B cell (primary cell): ENCODE measurements at regions of chr11 and their contacts with region 1.

Region 1: DNA sequence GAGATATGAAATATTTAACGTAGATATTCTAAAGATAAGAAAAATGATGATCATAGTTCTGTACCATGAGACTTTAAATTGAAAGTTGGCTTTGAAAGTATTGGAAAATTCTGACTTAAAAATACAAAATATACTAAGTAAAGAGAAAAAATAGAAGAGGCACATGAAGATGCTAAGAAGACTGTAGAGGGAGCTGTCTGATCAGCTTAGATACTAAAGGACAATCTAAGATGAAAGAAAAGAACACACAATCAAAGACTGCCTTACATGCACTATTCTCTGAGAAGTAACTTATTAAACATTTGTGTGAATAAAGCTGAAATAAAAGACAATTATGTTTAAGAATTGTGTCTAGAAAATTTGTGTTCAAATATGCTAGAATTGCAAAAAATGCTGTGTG is 55.1 kb downstream of the RBMXL2 start:
- DNase-seq: peak; percentile 5
- ATAC-seq: no peak
- H3K4me3 ChIP-seq: no peak overlapping the region
- H3K4me3 Mint-ChIP-seq: no peak overlapping the region
- H3K27ac ChIP-seq: no peak overlapping the region
- H3K27ac Mint-ChIP-seq: no peak overlapping the region
- H3K4me1 ChIP-seq: no peaks in the 10 kb centered on the region
- H3K4me1 Mint-ChIP-seq: no peaks in the 10 kb centered on the region
- H3K27me3 ChIP-seq: peaks cover 0 to 3% (median under 1%) of the 10 kb centered on the region in 4 experiments
- H3K27me3 Mint-ChIP-seq: peaks cover 8% of the 10 kb centered on the region
- CTCF ChIP-seq: no peak

Region 2: DNA sequence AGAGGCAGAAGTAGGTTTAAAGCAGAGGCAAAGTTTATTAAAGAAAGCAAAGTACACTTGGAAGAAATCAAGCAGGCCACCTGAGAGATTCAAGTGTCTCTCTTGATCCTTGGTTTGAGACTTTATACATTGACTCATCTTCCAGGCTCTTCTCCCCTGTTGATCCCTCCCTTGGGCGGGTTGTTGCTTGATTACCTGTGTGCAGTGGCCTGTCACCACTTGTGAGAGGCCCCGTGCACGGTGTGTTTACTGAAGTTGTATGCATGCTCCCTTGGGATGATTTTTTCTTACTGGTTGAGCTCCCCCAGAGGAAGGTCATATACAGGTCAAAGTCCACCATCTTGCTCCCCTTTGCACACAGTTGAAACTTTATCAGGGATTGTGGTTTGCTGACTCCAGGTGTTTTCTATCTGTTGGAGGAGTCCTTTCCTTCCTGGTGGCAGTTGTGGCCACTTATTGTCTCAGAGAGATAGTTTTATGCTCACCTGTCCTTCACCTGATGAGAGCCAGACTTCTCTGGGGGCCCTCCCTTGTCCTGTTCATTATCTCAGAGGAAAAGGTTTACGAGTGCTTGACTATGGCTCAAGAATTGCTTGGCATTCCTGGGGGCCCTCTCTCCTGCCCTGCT is 71.4 kb before region 1 on chr11:
- CTCF ChIA-PET with region 1: no interaction called
- POLR2A ChIA-PET with region 1: no interaction called
- intact Hi-C with region 1: no loop called
- DNase-seq: no peak
- ATAC-seq: no peak
- H3K4me3 ChIP-seq: no peak overlapping the region
- H3K4me3 Mint-ChIP-seq: no peak overlapping the region
- H3K27ac ChIP-seq: no peak overlapping the region
- H3K27ac Mint-ChIP-seq: no peak overlapping the region
- H3K4me1 ChIP-seq: no peaks in the 10 kb centered on the region
- H3K4me1 Mint-ChIP-seq: peaks cover 2% of the 10 kb centered on the region
- H3K27me3 ChIP-seq: peaks cover 0 to 2% (median 0%) of the 10 kb centered on the region in 4 experiments
- H3K27me3 Mint-ChIP-seq: peaks cover 6% of the 10 kb centered on the region
- CTCF ChIP-seq: no peak

Region 3: GRCh38 chr11:7175007-7175406 is 31.1 kb after region 1 on chr11:
- CTCF ChIA-PET with region 1: no interaction called
- POLR2A ChIA-PET with region 1: no interaction called
- intact Hi-C with region 1: no loop called
- DNase-seq: no peak
- ATAC-seq: no peak
- H3K4me3 ChIP-seq: no peak overlapping the region
- H3K4me3 Mint-ChIP-seq: no peak overlapping the region
- H3K27ac ChIP-seq: no peak overlapping the region
- H3K27ac Mint-ChIP-seq: no peak overlapping the region
- H3K4me1 ChIP-seq: no peaks in the 10 kb centered on the region
- H3K4me1 Mint-ChIP-seq: no peaks in the 10 kb centered on the region
- H3K27me3 ChIP-seq: peaks cover 0 to 2% (median 0%) of the 10 kb centered on the region in 4 experiments
- H3K27me3 Mint-ChIP-seq: peaks cover 21% of the 10 kb centered on the region
- CTCF ChIP-seq: no peak

Region 4: DNA sequence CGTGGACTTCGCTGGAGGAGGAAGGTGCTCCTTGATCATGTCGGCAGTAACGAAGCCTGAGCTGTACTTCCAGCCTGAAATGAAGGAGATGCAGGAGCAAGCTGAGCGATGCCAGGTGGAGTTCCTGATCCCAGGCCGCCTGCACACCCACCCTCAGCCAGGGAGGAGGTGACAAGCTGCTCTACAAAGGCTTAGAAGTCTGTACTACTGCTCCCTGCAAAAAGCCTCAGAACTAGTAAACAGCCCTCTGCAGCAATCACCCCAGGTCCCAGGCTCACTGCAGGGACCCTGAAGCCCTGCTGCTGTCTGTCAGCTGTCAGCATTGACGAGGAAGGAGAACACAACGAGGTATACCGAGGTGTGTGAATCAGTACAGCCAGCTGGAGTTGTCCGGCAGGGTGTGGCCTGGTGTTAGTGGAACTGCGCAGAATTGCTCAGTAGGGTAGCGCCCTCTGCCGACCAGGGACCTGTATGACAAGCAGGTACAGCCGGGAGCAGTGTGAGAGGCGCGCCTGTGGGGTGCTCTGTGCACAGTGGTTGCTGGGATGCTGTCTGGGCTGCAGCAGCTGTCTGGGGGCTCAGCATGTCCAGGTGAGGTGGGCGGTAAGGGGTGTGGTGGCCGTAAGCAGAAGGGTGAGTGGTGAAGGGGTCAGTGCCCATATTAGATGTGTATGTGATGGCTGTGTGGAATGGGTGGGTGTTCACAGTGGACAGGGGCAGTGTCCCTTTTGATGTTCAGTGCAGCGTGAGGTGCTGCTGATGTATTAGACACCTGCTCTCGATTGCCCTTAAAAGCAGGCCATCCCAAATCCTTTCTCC is 521.8 kb after region 1 on chr11:
- CTCF ChIA-PET with region 1: interaction called, 5 read pairs
- POLR2A ChIA-PET with region 1: no interaction called
- intact Hi-C with region 1: loop called (anchors 1 kb)
- DNase-seq: peak; percentile 81
- ATAC-seq: peak; percentile 100
- H3K4me3 ChIP-seq: no peak overlapping the region
- H3K4me3 Mint-ChIP-seq: no peak overlapping the region
- H3K27ac ChIP-seq: no peak overlapping the region
- H3K27ac Mint-ChIP-seq: no peak overlapping the region
- H3K4me1 ChIP-seq: peaks cover 0 to 8% of the 10 kb centered on the region in 2 donors
- H3K4me1 Mint-ChIP-seq: peaks cover 4% of the 10 kb centered on the region
- H3K27me3 ChIP-seq: no peaks in the 10 kb centered on the region
- H3K27me3 Mint-ChIP-seq: no peaks in the 10 kb centered on the region
- CTCF ChIP-seq: peak; percentile 94

Region 5: DNA sequence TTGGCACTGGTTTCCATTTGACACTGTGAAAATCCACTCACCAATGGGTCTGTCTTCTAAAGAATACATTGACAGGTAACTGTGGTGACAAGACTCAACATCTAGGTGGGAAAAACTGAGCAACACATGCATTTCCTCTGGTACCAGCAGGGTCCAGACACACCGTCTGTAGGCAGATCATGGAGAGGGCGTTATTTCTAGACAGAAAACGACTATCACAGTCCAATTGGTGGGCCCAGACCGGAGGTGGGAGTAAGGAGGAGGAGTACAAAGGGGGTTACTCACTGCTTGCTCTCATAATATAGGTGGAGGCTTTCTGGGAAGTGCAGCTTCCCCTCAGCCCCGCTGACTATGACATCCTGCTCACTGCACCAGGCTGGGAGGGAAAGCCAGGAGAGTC is 552.5 kb after region 1 on chr11:
- CTCF ChIA-PET with region 1: interaction called, 5 read pairs
- POLR2A ChIA-PET with region 1: no interaction called
- intact Hi-C with region 1: loop called (anchors 1 kb)
- DNase-seq: no peak
- ATAC-seq: no peak
- H3K4me3 ChIP-seq: no peak overlapping the region
- H3K4me3 Mint-ChIP-seq: no peak overlapping the region
- H3K27ac ChIP-seq: no peak overlapping the region
- H3K27ac Mint-ChIP-seq: no peak overlapping the region
- H3K4me1 ChIP-seq: peaks cover 2 to 3% of the 10 kb centered on the region in 2 donors
- H3K4me1 Mint-ChIP-seq: no peaks in the 10 kb centered on the region
- H3K27me3 ChIP-seq: peaks cover 0 to 21% (median 16%) of the 10 kb centered on the region in 4 experiments
- H3K27me3 Mint-ChIP-seq: peaks cover 41% of the 10 kb centered on the region
- CTCF ChIP-seq: no peak